ENCODE measurements at regions of chr1 and their contacts with region 1.

Region 1: DNA sequence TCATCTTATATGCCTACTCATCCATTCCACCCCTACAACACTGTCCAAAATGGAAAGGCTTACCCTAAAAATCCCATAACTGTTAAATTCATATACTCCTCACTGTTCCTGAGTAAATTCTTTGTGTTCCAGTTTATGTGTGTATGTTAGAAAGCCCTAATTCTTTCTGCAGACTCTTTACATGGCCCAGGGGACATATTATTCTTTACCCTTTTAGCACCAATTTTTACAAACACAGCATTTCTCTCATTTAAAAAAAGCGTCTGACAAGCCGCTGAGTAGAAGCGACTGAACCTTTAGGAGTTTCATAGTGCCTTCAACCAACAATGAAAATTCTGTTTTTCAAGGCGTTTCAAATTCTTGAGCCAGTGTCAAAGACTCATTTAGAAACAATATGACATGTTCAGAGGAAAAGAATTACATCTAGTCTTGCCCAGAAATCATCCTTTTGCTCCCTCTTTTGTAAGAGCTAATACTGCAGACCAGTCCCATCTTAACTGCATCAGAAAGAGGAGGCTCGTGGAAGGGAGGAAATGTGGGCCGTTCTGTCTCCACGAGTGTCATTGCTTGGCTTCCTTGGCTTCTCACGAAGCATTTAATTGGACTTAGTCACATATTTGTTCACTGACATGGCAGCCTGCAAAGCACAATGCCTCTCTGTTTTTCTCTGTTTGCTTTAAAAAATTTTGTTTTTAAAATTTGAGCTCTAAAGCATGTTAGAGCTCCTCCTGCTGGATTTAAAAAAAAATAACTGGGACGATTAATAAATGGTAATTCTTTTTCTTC is 21.3 kb upstream of the C1orf105 start:
- DNase-seq: peak; percentile 65
- H3K4me3 Mint-ChIP-seq: peak overlapping the region; percentile 13
- H3K27ac Mint-ChIP-seq: peak overlapping the region; percentile 76
- H3K4me1 Mint-ChIP-seq: peaks cover 48% of the 10 kb centered on the region
- H3K27me3 Mint-ChIP-seq: no peaks in the 10 kb centered on the region
- CTCF ChIP-seq: peak; percentile 43

Region 2: DNA sequence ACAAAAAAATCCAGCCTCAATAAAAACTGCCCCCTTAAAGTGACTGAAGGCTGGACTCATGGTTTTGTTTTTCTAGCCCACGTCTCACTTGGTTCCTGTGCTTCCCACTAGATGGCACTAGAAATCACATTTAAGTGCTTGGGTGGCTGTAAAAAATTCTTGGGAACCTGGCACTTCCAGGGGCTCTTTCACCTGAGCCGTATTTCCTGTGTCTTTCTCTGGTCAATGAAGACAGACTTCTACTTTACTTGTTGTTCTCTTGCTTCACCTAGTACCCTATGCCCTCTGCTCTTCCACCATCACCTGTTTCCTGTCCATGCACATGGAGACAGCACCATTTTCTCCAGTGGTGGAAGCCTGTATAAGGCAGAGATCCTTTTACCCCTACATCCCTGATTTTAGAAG is 597.7 kb before region 1 on chr1:
- CTCF ChIA-PET with region 1: interaction called, 4 read pairs
- intact Hi-C with region 1: loop called (anchors 10 kb)
- DNase-seq: peak; percentile 40
- H3K4me3 Mint-ChIP-seq: no peak overlapping the region
- H3K27ac Mint-ChIP-seq: no peak overlapping the region
- H3K4me1 Mint-ChIP-seq: peaks cover 8% of the 10 kb centered on the region
- H3K27me3 Mint-ChIP-seq: no peaks in the 10 kb centered on the region
- CTCF ChIP-seq: peak; percentile 74

Region 3: DNA sequence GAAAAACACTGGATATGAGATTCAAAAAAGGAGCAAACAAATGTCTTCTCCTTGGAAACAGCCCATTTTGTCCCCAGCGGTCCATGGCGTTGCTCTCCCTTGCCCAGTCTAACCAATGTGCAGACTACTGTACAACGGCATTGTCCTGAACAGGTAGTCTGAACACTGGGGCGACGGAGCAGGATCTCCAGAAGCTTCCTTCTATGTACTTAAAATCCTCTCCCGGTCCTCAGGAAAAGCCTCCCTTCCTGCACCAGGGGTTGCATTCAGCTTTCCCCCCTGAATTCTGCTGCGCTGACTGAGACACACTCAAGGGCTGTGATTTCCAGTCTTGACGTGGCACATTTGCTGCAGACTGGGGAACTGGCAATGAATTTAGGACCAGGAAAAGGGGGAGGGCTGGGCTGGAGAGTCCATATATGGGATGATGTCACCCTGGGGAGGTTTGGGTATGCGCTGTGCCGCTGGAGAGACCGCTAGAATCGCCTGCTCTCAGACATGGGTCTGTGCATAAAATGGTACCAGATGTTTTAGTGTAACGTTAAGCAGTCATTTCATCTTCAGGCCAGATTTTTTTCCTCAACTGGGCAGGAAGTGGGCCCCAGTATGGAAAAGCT is 254.6 kb before region 1 on chr1:
- CTCF ChIA-PET with region 1: interaction called, 4 read pairs
- intact Hi-C with region 1: loop called (anchors 5 kb)
- DNase-seq: no peak
- H3K4me3 Mint-ChIP-seq: no peak overlapping the region
- H3K27ac Mint-ChIP-seq: no peak overlapping the region
- H3K4me1 Mint-ChIP-seq: peaks cover 38% of the 10 kb centered on the region
- H3K27me3 Mint-ChIP-seq: no peaks in the 10 kb centered on the region
- CTCF ChIP-seq: no peak

Region 4: GRCh38 chr1:172254521-172255222 is 144.5 kb before region 1 on chr1:
- CTCF ChIA-PET with region 1: interaction called, 3 read pairs
- intact Hi-C with region 1: loop called (anchors 2 kb)
- DNase-seq: peak; percentile 24
- H3K4me3 Mint-ChIP-seq: no peak overlapping the region
- H3K27ac Mint-ChIP-seq: peak overlapping the region; percentile 32
- H3K4me1 Mint-ChIP-seq: peaks cover 30% of the 10 kb centered on the region
- H3K27me3 Mint-ChIP-seq: no peaks in the 10 kb centered on the region
- CTCF ChIP-seq: no peak

Region 5: GRCh38 chr1:172322219-172323061 is 76.7 kb before region 1 on chr1:
- CTCF ChIA-PET with region 1: interaction called, 11 read pairs
- intact Hi-C with region 1: loop called (anchors 2 kb)
- DNase-seq: peak; percentile 53
- H3K4me3 Mint-ChIP-seq: no peak overlapping the region
- H3K27ac Mint-ChIP-seq: no peak overlapping the region
- H3K4me1 Mint-ChIP-seq: peaks cover 11% of the 10 kb centered on the region
- H3K27me3 Mint-ChIP-seq: no peaks in the 10 kb centered on the region
- CTCF ChIP-seq: no peak